Thyroid gland (tissue), 4 donors: ENCODE measurements at regions of chr22 and their contacts with region 1.

Region 1: DNA sequence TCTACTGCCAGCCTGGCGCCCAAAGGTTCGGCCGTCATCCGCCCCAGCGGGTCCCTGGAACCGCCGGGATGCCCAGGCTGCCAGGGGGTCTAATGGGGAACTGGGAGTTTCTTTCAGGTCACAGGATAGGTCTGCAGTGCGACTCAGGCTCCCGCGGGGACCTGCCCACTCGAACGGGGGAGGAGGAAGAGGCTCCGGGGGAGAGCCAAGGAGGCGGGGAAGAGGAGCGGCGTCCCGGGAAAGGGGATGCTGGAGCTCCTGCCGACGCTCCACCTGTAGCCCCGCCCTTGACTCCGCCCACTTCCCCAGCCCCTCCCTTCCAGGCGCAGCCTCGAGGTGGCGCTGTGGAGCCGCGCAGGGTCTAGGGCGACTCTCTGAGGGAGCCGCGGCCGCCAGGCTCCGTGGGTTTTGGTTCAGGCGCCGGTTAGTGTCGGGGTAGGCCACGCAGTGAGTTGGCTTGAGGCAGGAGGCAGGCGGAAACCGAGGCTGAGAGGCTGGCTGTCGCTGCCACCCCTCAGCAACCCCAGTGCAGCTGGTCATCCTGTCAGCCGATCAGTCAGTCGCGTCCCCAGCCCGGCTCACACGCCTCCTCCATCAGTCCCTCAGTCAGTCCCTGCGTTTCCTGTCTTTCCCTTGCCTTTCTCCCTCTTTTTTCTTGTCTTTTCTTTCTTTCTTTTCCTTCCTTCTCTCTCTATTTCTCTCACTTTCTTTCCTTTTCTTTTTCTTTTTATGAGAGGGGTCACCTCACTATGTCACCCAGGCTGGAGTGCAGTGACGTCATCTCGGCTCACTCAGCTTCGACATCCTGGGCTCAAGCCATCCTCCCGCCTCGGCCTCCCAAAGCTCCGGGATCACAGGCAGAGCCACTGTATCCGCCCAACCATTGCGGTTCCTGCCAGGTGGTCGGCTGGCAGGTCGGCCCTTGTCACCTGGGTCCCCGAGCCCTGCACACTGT is 26.4 kb downstream of the YWHAH start:
- DNase-seq: peak; percentile 67 to 69
- H3K4me3 ChIP-seq: peak overlapping the region in 1 of 3 donors; percentile 19
- H3K27ac ChIP-seq: peak overlapping the region in 1 of 3 donors; percentile 48
- H3K4me1 ChIP-seq: peaks cover 5 to 8% of the 10 kb centered on the region in 2 donors
- H3K27me3 ChIP-seq: no peaks in the 10 kb centered on the region
- CTCF ChIP-seq: peak; percentile 26 to 86 (median 78)
- POLR2A ChIP-seq: no peak

Region 2: GRCh38 chr22:31561238-31561887 is 409.4 kb before region 1 on chr22:
- intact Hi-C with region 1: loop called (anchors 5 kb)
- DNase-seq: peak; percentile 86 to 89
- H3K4me3 ChIP-seq: no peak overlapping the region
- H3K27ac ChIP-seq: peak overlapping the region in 1 of 3 donors; percentile 16
- H3K4me1 ChIP-seq: no peaks in the 10 kb centered on the region
- H3K27me3 ChIP-seq: no peaks in the 10 kb centered on the region
- CTCF ChIP-seq: peak; percentile 31 to 85 (median 74)
- POLR2A ChIP-seq: no peak

Region 3: GRCh38 chr22:31841078-31841827 is 129.5 kb before region 1 on chr22:
- intact Hi-C with region 1: no loop called
- DNase-seq: peak; percentile 39 to 54
- H3K4me3 ChIP-seq: no peak overlapping the region
- H3K27ac ChIP-seq: peak overlapping the region in 2 of 3 donors; percentile 29 to 62
- H3K4me1 ChIP-seq: peaks cover 9 to 13% of the 10 kb centered on the region in 2 donors
- H3K27me3 ChIP-seq: no peaks in the 10 kb centered on the region
- CTCF ChIP-seq: no peak
- POLR2A ChIP-seq: no peak

Region 4: GRCh38 chr22:32080904-32081303 is 110.1 kb after region 1 on chr22:
- intact Hi-C with region 1: loop called (anchors 10 kb)
- DNase-seq: peak; percentile 16
- H3K4me3 ChIP-seq: no peak overlapping the region
- H3K27ac ChIP-seq: no peak overlapping the region
- H3K4me1 ChIP-seq: no peaks in the 10 kb centered on the region
- H3K27me3 ChIP-seq: no peaks in the 10 kb centered on the region
- CTCF ChIP-seq: peak; percentile 20 to 59 (median 44)
- POLR2A ChIP-seq: no peak